Left ventricle myocardium inferior (tissue), 1 donor: ENCODE measurements at regions of chr20 and their contacts with region 1.

Region 1: DNA sequence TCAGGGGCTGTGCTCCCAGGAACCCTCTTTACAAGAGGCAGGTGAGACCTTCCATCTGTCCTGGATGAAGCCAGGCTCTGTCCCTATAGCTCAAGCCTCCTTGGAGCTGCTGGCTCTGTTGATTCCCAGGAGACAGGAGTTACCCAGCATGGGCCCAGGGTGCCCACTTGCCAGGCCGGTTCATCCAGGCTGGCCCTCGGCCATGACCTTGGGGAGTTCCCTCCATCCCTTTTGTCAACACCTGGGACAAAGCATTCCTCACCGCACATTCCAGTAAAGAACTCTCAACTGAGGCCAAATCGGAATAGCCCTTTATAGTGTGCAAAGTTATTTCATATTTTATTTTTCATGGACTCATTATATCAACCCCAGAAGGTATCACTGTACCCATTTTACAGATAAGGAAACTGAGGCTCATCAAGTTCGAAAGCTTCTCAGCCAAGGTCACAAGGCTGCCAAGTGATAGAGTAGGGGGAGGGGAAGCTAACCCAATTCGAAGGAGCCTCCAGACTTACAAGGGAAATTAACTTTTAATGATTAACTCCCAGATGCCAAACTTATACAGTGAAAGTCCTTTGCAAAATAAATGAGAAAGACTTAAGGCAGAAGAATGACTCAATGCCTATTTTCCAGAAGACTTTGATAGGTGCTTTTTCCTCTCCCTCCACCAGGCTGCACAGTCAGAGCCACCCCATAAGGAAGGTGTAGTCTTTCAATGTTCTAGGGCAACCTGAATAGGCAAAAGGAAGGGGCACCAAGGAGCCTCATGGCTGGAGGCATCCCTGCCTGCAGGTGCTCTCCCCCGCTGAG is 18.5 kb downstream of the SDC4 start:
- DNase-seq: no peak
- H3K4me3 ChIP-seq: no peak overlapping the region
- H3K27ac ChIP-seq: no peak overlapping the region
- H3K4me1 ChIP-seq: peaks cover 23% of the 10 kb centered on the region
- H3K27me3 ChIP-seq: no peaks in the 10 kb centered on the region
- CTCF ChIP-seq: no peak

Region 2: GRCh38 chr20:45445805-45446562 is 116.3 kb after region 1 on chr20:
- intact Hi-C with region 1: loop called (anchors 5 kb)
- DNase-seq: no peak
- H3K4me3 ChIP-seq: no peak overlapping the region
- H3K27ac ChIP-seq: no peak overlapping the region
- H3K4me1 ChIP-seq: no peaks in the 10 kb centered on the region
- H3K27me3 ChIP-seq: peaks cover 7% of the 10 kb centered on the region
- CTCF ChIP-seq: peak; percentile 41